ENCODE measurements at regions of chr5 and their contacts with region 1.

Region 1: DNA sequence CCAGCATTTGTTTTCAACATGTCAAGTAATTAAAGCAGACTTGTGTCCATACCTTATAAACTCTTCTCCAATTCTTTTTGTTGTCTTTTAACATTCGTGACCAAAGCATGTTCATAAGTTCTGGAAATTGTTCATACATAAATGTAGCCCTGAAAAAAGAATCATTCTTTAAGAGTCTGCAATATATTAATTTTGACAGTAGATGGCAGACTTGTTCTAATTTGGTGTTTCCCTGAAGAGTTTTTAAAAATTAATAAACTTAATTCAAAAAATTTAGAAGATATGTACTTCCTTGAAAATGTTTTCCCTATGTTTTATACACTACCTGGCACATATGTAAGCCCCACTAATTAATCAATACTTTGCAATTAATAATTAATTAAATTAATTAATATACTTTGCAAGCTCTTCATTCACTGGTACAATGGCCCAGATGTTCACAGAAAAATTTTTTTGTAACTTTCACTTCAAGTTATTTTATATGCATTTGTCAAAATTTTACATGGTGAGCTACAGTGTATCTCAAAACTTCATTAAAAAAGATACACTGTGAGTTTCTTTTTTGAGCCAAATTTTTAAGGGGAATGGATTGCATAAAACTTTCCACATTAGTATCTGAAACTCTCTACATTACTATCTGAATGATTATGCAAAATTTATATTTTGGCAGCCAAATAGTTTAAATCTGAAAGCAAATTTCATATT is 42.1 kb downstream of the CLINT1 start:
- DNase-seq: peak; percentile 32
- H3K4me3 ChIP-seq: no peak overlapping the region
- H3K27ac ChIP-seq: no peak overlapping the region
- H3K4me1 ChIP-seq: peaks cover 29% of the 10 kb centered on the region
- H3K27me3 ChIP-seq: no peaks in the 10 kb centered on the region
- CTCF ChIP-seq: peak; percentile 61

Region 2: GRCh38 chr5:157471709-157472108 is 345.1 kb before region 1 on chr5:
- CTCF ChIA-PET with region 1: interaction called, 10 read pairs
- POLR2A ChIA-PET with region 1: no interaction called
- intact Hi-C with region 1: no loop called
- DNase-seq: peak; percentile 31
- H3K4me3 ChIP-seq: no peak overlapping the region
- H3K27ac ChIP-seq: no peak overlapping the region
- H3K4me1 ChIP-seq: no peaks in the 10 kb centered on the region
- H3K27me3 ChIP-seq: no peaks in the 10 kb centered on the region
- CTCF ChIP-seq: peak; percentile 67

Region 3: DNA sequence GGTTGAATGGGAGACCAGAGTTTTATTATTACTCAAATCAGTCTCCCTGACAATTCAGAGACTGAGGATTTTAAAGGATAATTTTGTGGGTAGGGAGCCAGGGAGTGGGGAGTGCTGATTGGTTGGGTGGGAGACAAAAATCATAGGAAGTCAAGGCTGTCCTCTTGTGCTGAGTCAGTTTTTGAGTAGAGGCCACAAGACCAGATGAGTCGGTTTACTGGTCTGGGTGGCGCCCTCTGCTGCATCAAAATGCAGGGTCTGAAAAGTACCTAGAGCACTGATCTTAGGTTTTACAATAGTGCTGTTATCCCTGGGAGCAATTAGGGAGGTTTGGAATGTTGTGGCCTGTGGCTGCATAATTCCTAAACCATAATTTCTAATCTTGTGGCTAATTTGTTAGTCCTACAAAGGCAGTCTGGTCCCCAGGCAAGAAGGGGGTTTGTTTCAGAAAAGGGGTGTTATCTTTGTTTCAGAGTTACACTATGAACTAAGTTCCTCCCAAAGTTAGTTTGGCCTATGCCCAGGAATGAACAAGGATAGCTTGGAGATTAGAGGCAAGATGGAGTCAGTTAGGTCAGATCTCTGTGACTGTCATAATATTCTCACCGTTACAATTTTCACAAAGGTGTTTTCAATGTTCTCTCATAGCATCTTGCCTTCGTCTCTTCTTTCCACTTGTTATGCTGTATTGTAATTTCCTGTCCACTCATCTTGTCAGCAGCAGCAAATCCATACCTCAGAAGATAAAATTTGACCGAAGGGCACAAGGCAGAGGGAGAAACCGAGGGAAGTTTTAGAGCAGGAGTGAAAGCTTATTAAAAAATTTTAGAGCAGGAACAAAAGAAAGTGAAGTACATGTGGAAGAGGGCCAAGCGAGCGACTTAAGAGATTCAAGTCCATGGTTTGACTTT is 101.3 kb after region 1 on chr5:
- CTCF ChIA-PET with region 1: interaction called, 5 read pairs
- POLR2A ChIA-PET with region 1: no interaction called
- intact Hi-C with region 1: loop called (anchors 2 kb)
- DNase-seq: peak; percentile 78
- H3K4me3 ChIP-seq: no peak overlapping the region
- H3K27ac ChIP-seq: peak overlapping the region; percentile 37
- H3K4me1 ChIP-seq: peaks cover 41% of the 10 kb centered on the region
- H3K27me3 ChIP-seq: no peaks in the 10 kb centered on the region
- CTCF ChIP-seq: peak; percentile 63

Region 4: DNA sequence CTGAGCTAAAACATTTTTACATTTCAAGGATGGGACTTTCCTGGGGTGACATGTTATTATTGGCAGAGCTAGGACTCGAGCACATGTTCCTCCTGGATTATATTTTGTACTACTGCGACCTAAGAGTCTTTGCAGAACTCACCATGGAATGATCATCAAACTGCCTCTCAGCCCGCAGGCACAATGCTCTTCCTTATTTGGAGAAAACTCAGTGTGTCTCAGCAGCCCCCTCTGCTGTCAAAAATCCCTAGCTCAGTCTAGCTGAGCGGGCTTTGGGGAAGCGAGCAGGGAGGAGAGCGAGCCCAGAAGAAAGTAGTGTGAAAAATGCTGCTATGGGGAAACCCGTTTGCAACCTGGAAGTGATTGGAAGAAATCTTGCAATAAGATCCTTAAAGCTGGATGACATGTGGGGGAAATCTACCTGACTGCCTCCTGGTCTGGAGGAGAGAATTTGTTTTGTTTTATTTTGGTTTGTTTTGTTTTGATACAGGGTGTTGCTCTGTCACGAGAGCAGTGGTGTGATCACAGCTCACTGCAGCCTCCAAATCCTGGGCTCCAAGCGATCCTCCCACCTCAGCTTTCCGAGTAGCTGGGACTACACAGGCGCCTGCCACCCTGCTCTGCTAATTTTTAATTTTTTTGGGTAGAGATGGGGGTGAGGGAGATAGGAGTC is 132.0 kb after region 1 on chr5:
- CTCF ChIA-PET with region 1: interaction called, 9 read pairs
- POLR2A ChIA-PET with region 1: no interaction called
- intact Hi-C with region 1: loop called (anchors 2 kb)
- DNase-seq: peak; percentile 93
- H3K4me3 ChIP-seq: no peak overlapping the region
- H3K27ac ChIP-seq: peak overlapping the region; percentile 79
- H3K4me1 ChIP-seq: peaks cover 30% of the 10 kb centered on the region
- H3K27me3 ChIP-seq: no peaks in the 10 kb centered on the region
- CTCF ChIP-seq: peak; percentile 83

Region 5: GRCh38 chr5:157994906-157995519 is 178.2 kb after region 1 on chr5:
- CTCF ChIA-PET with region 1: interaction called, 4 read pairs
- POLR2A ChIA-PET with region 1: no interaction called
- intact Hi-C with region 1: loop called (anchors 5 kb)
- DNase-seq: peak; percentile 64
- H3K4me3 ChIP-seq: no peak overlapping the region
- H3K27ac ChIP-seq: no peak overlapping the region
- H3K4me1 ChIP-seq: no peaks in the 10 kb centered on the region
- H3K27me3 ChIP-seq: no peaks in the 10 kb centered on the region
- CTCF ChIP-seq: peak; percentile 58

Measured in A673 (cell line).